SK-N-SH (cell line): ENCODE measurements at regions of chr2 and their contacts with region 1.

Region 1: DNA sequence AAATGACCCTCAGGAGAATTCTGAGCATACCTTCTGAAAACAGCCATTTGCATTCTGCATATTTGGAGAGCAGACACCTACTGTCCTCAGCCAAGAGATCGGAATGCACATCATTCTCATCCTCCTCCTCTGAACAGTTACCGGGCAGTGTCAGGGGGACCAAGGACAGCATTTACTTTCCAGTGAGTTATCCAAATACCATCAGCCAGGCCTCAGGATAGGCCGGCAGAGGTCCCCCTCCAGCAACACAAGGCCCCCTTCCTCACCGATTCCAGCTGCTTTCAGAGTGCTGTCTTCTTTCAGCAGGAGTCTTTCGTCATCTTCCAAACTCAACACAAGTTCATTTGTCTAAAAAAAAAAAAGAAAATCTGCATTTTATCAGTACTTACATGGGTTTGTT is 55.3 kb downstream of the C2orf76 start:
- DNase-seq: no peak
- H3K4me3 ChIP-seq: no peak overlapping the region
- H3K27ac ChIP-seq: no peak overlapping the region
- H3K4me1 ChIP-seq: peaks cover 0 to 2% of the 10 kb centered on the region in 2 experiments; a peak in 1 of 4 replicates
- H3K27me3 ChIP-seq: no peaks in the 10 kb centered on the region
- CTCF ChIP-seq: no peak
- EP300 ChIP-seq: no peak
- RAD21 ChIP-seq: no peak

Region 2: GRCh38 chr2:119290859-119291587 is 20.3 kb before region 1 on chr2:
- CTCF ChIA-PET with region 1: interaction called, 16 read pairs
- POLR2A ChIA-PET with region 1: no interaction called
- DNase-seq: peak; percentile 63
- H3K4me3 ChIP-seq: peak overlapping the region in 1 of 2 experiments; percentile 26; a peak in 1 of 4 replicates
- H3K27ac ChIP-seq: no peak overlapping the region
- H3K4me1 ChIP-seq: no peaks in the 10 kb centered on the region
- H3K27me3 ChIP-seq: no peaks in the 10 kb centered on the region
- CTCF ChIP-seq: peak; percentile 59
- EP300 ChIP-seq: no peak
- RAD21 ChIP-seq: peak; percentile 72

Region 3: DNA sequence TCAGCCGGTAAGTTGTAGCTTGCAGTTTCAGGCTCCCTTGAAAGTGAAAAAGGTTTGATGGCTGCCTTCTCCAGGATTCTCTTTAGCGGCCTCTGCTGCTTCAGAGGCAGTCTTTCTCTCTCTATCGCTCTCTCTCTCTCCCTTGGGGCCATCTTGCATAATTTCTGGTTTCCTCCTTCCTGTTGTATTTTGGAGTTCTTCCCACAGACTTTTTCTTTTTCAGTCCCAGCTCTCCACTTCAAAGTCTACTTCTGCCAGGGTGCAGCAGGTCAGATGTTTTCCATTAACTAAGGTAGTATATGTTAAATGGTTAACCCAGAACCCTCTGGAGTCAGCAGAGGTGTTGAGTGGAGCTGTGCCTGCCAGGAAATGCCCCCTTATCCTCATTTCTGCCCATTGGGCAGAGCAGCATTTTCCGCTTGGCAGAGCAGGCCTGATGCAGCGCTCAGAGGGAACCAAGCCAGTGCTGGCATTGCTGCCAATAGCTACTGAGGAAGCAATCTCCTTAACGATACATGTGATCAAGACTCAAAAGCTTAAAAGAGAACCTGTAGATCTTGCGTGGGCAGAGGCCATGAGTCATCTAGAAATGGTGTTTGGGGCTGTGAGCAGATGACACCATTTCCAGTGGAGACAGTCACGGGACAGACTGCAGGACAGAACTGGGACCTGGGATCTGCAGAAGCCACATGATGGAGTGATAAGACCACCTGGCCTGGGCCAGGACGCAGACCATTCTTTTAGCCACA is 76.2 kb after region 1 on chr2:
- CTCF ChIA-PET with region 1: no interaction called
- POLR2A ChIA-PET with region 1: no interaction called
- DNase-seq: peak; percentile 22
- H3K4me3 ChIP-seq: no peak overlapping the region
- H3K27ac ChIP-seq: 0 out of 4 replicates have a peak overlapping the region, but pooled peaks of 1 of the 2 experiments have one; percentile 31
- H3K4me1 ChIP-seq: peaks cover 14 to 24% of the 10 kb centered on the region in 2 experiments; a peak in 3 of 4 replicates
- H3K27me3 ChIP-seq: no peaks in the 10 kb centered on the region
- CTCF ChIP-seq: no peak
- EP300 ChIP-seq: no peak
- RAD21 ChIP-seq: no peak